ENCODE measurements at regions of chr2 and their contacts with region 1.

Region 1: DNA sequence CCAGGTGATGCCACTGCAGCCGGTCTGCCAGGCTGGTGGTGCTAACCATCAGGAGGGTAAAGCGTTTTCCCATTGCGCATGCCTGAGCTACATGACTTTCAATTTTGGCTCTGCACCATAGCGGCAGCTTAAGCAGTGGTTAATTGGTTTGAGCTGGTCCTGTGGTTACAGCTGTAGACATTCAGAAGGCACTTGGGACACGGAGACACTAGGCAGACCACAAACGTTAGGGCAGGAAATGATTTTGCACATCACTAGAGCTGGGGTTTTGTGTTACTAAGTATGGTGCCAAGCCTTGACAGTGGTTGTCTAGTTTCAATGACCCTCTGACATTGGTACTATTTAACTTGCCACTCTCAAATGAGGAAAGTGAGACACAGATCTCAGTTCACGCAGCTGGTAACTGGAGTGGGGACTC is 28.9 kb upstream of the CNOT11 start:
- DNase-seq: no peak
- ATAC-seq: 0 out of 2 replicates have a peak, but pooled peaks have one; percentile 27
- H3K4me3 ChIP-seq: no peak overlapping the region
- H3K27ac ChIP-seq: no peak overlapping the region
- H3K4me1 ChIP-seq: no peaks in the 10 kb centered on the region
- H3K27me3 ChIP-seq: no peaks in the 10 kb centered on the region
- CTCF ChIP-seq: no peak

Region 2: DNA sequence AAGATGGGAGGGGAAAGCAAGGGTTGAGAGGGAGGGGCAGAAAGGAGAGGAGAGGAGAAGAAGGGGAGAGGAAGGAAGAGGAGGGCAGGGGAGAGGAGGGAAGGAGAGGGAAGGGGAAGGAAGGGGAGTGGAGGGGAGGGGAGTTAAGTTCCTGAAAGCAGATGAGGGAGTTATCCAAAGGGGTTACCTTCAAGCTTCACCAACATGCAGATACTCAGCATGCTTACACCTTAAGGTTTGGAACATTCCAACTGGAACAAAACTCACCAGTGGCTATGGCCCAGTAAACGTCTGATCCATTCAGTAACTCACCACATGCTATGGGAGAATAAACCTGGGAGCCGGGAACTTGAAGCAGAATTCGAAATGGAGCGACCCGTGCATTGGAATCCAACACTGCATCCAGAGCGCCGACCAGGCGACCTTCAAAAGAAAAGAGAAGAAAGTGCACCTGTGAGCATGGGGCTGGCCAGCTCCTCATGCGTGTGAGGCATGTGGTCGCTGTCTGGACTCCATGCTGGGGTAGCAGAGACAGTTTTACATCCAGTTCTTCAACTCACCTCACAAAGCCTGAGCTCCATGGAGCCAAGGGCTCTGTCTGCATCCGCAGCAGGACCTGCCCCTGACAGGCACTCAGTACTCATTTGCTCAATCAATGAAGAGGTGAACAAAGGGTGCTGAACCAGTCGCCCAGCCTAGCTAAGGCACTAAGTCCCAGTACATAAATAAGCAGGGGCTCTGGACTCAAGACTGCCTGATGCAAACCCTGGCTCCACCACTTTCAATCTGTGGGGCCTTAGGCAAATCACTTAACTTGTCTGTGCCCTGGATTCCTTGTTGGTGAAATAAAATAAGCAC is 133.7 kb before region 1 on chr2:
- CTCF ChIA-PET with region 1: interaction called, 13 read pairs
- POLR2A ChIA-PET with region 1: no interaction called
- in situ Hi-C with region 1: no loop called
- intact Hi-C with region 1: no loop called
- DNase-seq: no peak
- ATAC-seq: peak; percentile 49
- H3K4me3 ChIP-seq: no peak overlapping the region
- H3K27ac ChIP-seq: peak overlapping the region; percentile 49
- H3K4me1 ChIP-seq: peaks cover 35% of the 10 kb centered on the region
- H3K27me3 ChIP-seq: no peaks in the 10 kb centered on the region
- CTCF ChIP-seq: no peak

Region 3: GRCh38 chr2:101446869-101447268 is 223.0 kb after region 1 on chr2:
- CTCF ChIA-PET with region 1: no interaction called
- POLR2A ChIA-PET with region 1: no interaction called
- in situ Hi-C with region 1: no loop called
- intact Hi-C with region 1: no loop called
- DNase-seq: no peak
- ATAC-seq: no peak
- H3K4me3 ChIP-seq: no peak overlapping the region
- H3K27ac ChIP-seq: no peak overlapping the region
- H3K4me1 ChIP-seq: no peaks in the 10 kb centered on the region
- H3K27me3 ChIP-seq: no peaks in the 10 kb centered on the region
- CTCF ChIP-seq: no peak

Region 4: DNA sequence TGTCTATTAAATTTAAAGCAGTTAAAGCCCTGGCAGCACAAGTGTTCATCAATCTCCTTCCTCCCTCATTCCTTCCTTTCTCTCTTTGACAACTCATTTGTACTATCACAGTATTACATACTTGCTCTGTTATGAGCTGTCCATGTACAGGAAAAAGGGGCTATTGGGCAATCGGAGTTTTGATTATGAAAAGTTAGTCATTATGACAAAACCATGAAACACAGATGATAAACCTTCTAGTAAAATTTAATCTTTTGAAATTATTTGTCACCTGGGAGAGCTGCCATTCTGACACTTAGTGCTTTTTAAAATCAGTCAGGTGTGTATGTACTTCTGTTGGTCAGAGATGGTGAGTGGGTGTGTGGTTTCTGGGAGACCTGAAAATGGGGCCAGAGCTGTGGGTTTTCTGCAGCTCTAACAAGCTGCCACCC is 513.1 kb after region 1 on chr2:
- CTCF ChIA-PET with region 1: no interaction called
- POLR2A ChIA-PET with region 1: no interaction called
- in situ Hi-C with region 1: no loop called
- intact Hi-C with region 1: no loop called
- DNase-seq: no peak
- ATAC-seq: no peak
- H3K4me3 ChIP-seq: no peak overlapping the region
- H3K27ac ChIP-seq: no peak overlapping the region
- H3K4me1 ChIP-seq: peaks cover 6% of the 10 kb centered on the region
- H3K27me3 ChIP-seq: no peaks in the 10 kb centered on the region
- CTCF ChIP-seq: no peak